K562 (cell line): ENCODE measurements at regions of chr16 and their contacts with region 1.

Region 1: GRCh38 chr16:2980227-2981086 is at the start of gene PKMYT1:
- DNase-seq: peak; percentile 95 to 99 (median 98)
- ATAC-seq: peak; percentile 78
- H3K4me3 ChIP-seq: peak within 1 kb of the TSS; percentile 63
- H3K27ac ChIP-seq: peak within 1 kb of the TSS; percentile 99
- H3K4me1 ChIP-seq: peaks cover 19 to 79% of the 10 kb centered on the region in 2 experiments
- H3K27me3 ChIP-seq: no peaks in the 10 kb centered on the region
- CTCF ChIP-seq: no peak
- EP300 ChIP-seq: no peak
- POLR2A ChIP-seq: peak; percentile 93
- RAD21 ChIP-seq: no peak
- polyA plus RNA-seq, gene PKMYT1: 8.7 to 12.8 TPM

Region 2: DNA sequence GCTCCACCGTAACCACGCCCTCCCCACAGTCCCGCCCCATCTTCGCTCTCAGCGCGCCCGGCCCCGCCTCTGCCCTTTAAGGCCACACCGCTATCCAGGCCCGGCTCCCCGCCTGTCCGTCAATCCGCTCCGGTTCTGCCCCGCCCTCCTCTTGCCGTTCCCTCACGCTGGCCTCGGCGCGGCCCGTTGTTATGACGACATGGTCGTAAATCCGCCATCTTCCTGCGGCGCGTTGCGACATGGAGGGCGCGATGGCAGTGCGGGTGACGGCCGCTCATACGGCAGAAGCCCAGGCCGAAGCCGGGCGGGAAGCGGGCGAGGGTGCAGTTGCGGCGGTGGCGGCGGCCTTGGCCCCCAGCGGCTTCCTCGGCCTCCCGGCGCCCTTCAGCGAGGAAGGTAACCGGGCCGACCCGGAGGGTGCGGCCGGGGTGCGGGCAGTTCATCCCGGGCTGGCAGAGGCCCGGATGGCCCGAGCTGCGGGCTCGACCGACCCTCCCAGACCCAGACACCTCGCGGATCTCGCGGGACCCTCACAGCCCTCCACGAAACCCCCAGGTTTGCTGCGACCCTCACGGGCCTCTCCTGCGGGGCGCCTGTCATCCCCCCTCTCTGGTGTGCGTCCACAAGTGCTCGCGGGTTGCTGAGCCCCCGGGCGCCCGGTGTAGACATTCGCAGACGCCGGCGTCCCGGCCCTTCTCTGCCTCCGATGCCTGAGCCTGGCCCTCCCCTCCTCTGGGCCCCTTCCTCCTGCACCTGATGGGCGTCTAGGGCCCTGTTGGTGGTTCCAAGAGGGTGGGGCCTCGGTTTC is 756.9 kb before region 1 on chr16 and contains the start of gene E4F1:
- CTCF ChIA-PET with region 1: no interaction called
- POLR2A ChIA-PET with region 1: no interaction called
- in situ Hi-C with region 1: no loop called
- intact Hi-C with region 1: no loop called
- DNase-seq: peak; percentile 94 to 100 (median 96)
- ATAC-seq: peak; percentile 94
- H3K4me3 ChIP-seq: peak within 1 kb of the TSS; percentile 87
- H3K27ac ChIP-seq: peak within 1 kb of the TSS; percentile 82
- H3K4me1 ChIP-seq: peaks cover 11 to 58% of the 10 kb centered on the region in 2 experiments; a peak in 3 of 5 replicates
- H3K27me3 ChIP-seq: no peaks in the 10 kb centered on the region
- CTCF ChIP-seq: no peak
- EP300 ChIP-seq: 0 out of 2 replicates have a peak, but pooled peaks have one; percentile 6
- POLR2A ChIP-seq: peak; percentile 92
- RAD21 ChIP-seq: no peak
- polyA plus RNA-seq, gene E4F1: 0.48 to 0.96 TPM

Region 3: GRCh38 chr16:2474877-2475412 is 505.5 kb before region 1 on chr16 and contains the start of gene TBC1D24:
- CTCF ChIA-PET with region 1: no interaction called
- POLR2A ChIA-PET with region 1: no interaction called
- in situ Hi-C with region 1: no loop called
- intact Hi-C with region 1: no loop called
- DNase-seq: peak; percentile 88 to 97 (median 96)
- ATAC-seq: peak; percentile 69
- H3K4me3 ChIP-seq: peak within 1 kb of the TSS; percentile 76
- H3K27ac ChIP-seq: peak within 1 kb of the TSS; percentile 88
- H3K4me1 ChIP-seq: peaks cover 44 to 95% of the 10 kb centered on the region in 2 experiments
- H3K27me3 ChIP-seq: no peaks in the 10 kb centered on the region
- CTCF ChIP-seq: no peak
- EP300 ChIP-seq: no peak
- POLR2A ChIP-seq: no peak
- RAD21 ChIP-seq: no peak
- polyA plus RNA-seq, gene TBC1D24: 1.7 to 4.2 TPM

Region 4: DNA sequence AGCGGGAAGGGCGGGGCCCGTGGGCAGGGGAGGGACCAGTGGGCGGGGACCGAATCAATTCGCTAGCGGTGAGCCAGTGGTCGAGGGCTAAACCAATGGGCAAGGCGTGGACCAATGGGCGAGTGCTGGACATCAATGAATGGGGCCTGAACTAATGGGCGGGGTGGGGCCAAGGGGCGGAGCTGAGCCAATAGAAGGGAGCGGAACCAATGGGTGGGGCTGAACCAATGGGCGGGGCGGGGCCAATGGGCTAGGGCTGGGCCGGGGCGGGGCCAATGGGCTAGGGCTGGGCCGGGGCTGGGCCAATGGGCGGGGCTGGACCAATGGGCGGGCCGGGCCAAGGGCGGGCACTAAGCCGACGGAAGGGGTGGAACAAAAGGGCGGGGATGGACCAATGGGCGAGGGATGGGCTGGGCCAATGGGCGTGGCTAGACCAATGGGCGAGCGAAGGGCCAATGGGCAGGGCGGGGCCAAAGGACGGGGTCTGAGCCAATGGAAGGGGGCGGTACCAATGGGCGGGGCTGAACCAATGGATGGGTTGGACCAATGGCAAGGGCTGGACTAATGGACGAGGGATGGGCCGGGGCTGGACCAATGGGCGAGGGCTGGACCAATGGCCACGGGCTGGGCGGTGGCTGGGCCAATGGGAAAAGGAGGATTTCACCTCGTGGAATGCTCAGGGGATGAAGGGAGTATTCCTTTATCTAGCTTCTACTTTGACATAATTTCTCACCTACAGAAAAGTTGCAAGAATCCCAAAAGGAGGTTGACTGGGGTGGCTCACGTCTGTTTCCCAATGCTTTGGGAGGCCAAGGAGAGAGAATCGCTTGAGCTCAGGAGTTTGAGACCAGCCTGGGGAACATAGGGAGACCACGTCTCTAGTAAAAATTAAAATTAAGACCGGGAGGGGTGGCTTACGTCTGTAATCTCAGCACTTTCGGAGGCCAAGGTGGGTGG is 74.7 kb before region 1 on chr16:
- CTCF ChIA-PET with region 1: interaction called, 4 read pairs
- POLR2A ChIA-PET with region 1: interaction called, 5 read pairs
- in situ Hi-C with region 1: no loop called
- intact Hi-C with region 1: loop called (anchors 2 kb)
- DNase-seq: peak; percentile 96 to 99 (median 98)
- ATAC-seq: peak; percentile 90
- H3K4me3 ChIP-seq: peak overlapping the region; percentile 99
- H3K27ac ChIP-seq: peak overlapping the region; percentile 94
- H3K4me1 ChIP-seq: peaks cover 14 to 33% of the 10 kb centered on the region in 2 experiments; a peak in 4 of 5 replicates
- H3K27me3 ChIP-seq: no peaks in the 10 kb centered on the region
- CTCF ChIP-seq: no peak
- EP300 ChIP-seq: no peak
- POLR2A ChIP-seq: no peak
- RAD21 ChIP-seq: no peak

Region 5: GRCh38 chr16:2926650-2927646 is 53.5 kb before region 1 on chr16:
- CTCF ChIA-PET with region 1: no interaction called
- POLR2A ChIA-PET with region 1: no interaction called
- in situ Hi-C with region 1: no loop called
- intact Hi-C with region 1: loop called (anchors 5 kb)
- DNase-seq: peak; percentile 75 to 93 (median 78)
- ATAC-seq: peak; percentile 98
- H3K4me3 ChIP-seq: no peak overlapping the region
- H3K27ac ChIP-seq: no peak overlapping the region
- H3K4me1 ChIP-seq: peaks cover 3 to 22% of the 10 kb centered on the region in 2 experiments; a peak in 3 of 5 replicates
- H3K27me3 ChIP-seq: no peaks in the 10 kb centered on the region
- CTCF ChIP-seq: peak; percentile 96 to 99 (median 97)
- EP300 ChIP-seq: no peak
- POLR2A ChIP-seq: no peak
- RAD21 ChIP-seq: peak; percentile 64 to 78

Region 6: DNA sequence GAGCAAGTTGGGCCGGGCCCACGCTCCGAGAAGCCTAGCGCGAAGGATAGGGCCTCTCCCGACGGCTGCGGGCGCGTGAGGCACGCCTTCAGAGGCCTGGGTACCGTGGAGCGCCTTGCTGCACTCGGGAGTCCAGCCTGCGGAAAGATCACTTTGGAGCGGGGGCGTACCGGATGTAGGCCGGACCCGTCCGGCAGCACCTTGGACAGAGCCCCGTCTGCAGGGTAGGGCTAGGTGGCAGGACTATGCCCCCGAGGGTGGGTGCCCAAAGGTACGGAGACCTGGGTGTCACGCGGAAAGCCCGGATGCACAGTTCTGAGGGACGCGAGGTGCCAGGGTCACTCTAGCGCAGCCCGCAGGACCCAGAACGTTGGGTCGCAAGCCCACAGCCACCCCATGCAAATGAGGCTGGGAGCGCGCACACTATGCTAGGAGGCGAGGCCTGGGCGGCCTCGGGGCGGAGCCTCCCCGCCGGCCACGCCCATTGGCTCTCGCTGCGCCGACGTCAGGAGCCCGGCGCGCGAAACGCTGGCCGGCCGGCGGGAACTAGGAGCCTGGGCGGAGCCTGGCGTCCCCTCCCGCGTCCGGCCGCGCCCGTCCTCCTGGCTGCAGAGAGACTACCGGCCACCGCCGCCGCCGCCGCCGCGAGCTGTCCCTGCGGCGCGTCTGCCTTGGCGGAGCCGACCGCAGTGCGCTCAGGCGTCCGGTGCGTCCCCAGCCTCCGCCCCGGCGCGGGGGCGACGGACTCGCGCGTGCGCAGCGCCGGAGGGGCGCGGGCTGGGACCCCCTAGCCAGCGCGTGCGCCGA is 11.5 kb before region 1 on chr16 and contains the start of gene PAQR4:
- CTCF ChIA-PET with region 1: no interaction called
- POLR2A ChIA-PET with region 1: interaction called, 23 read pairs
- in situ Hi-C with region 1: no loop called
- intact Hi-C with region 1: loop called (anchors 2 kb)
- DNase-seq: peak; percentile 84 to 95 (median 90)
- ATAC-seq: peak; percentile 77
- H3K4me3 ChIP-seq: peak within 1 kb of the TSS; percentile 96
- H3K27ac ChIP-seq: peak within 1 kb of the TSS; percentile 84
- H3K4me1 ChIP-seq: peaks cover 17 to 96% of the 10 kb centered on the region in 2 experiments
- H3K27me3 ChIP-seq: no peaks in the 10 kb centered on the region
- CTCF ChIP-seq: no peak
- EP300 ChIP-seq: 0 out of 2 replicates have a peak, but pooled peaks have one; percentile 15
- POLR2A ChIP-seq: peak; percentile 70
- RAD21 ChIP-seq: no peak
- polyA plus RNA-seq, gene PAQR4: 0.62 to 1.0 TPM